ENCODE measurements at regions of chr1 and their contacts with region 1.

Region 1: GRCh38 chr1:94617134-94617805 is 75.7 kb upstream of the F3 start:
- DNase-seq: peak; percentile 59 to 95
- H3K4me3 ChIP-seq: no peak overlapping the region; the same call in 1 of the 2 replicates
- H3K27ac ChIP-seq: peak overlapping the region; percentile 76
- H3K4me1 ChIP-seq: peaks cover 71% of the 10 kb centered on the region
- H3K27me3 ChIP-seq: no peaks in the 10 kb centered on the region
- CTCF ChIP-seq: no peak

Region 2: GRCh38 chr1:94562519-94563260 is 54.6 kb before region 1 on chr1:
- CTCF ChIA-PET with region 1: no interaction called
- POLR2A ChIA-PET with region 1: interaction called, 20 read pairs
- intact Hi-C with region 1: loop called (anchors 1 kb)
- DNase-seq: peak; percentile 75 to 94
- H3K4me3 ChIP-seq: no peak overlapping the region; the same call in 1 of the 2 replicates
- H3K27ac ChIP-seq: peak overlapping the region; percentile 65
- H3K4me1 ChIP-seq: peaks cover 39% of the 10 kb centered on the region
- H3K27me3 ChIP-seq: no peaks in the 10 kb centered on the region
- CTCF ChIP-seq: no peak

Region 3: GRCh38 chr1:94579876-94580294 is 37.4 kb before region 1 on chr1:
- CTCF ChIA-PET with region 1: no interaction called
- POLR2A ChIA-PET with region 1: interaction called, 12 read pairs
- intact Hi-C with region 1: loop called (anchors 1 kb)
- DNase-seq: peak; percentile 88 to 98
- H3K4me3 ChIP-seq: no peak overlapping the region
- H3K27ac ChIP-seq: peak overlapping the region; percentile 66
- H3K4me1 ChIP-seq: peaks cover 35% of the 10 kb centered on the region
- H3K27me3 ChIP-seq: no peaks in the 10 kb centered on the region
- CTCF ChIP-seq: no peak

Region 4: GRCh38 chr1:94592571-94592920 is 24.7 kb before region 1 on chr1:
- CTCF ChIA-PET with region 1: no interaction called
- POLR2A ChIA-PET with region 1: no interaction called
- intact Hi-C with region 1: no loop called
- DNase-seq: no peak
- H3K4me3 ChIP-seq: no peak overlapping the region
- H3K27ac ChIP-seq: no peak overlapping the region
- H3K4me1 ChIP-seq: peaks cover 15% of the 10 kb centered on the region
- H3K27me3 ChIP-seq: no peaks in the 10 kb centered on the region
- CTCF ChIP-seq: no peak

Region 5: DNA sequence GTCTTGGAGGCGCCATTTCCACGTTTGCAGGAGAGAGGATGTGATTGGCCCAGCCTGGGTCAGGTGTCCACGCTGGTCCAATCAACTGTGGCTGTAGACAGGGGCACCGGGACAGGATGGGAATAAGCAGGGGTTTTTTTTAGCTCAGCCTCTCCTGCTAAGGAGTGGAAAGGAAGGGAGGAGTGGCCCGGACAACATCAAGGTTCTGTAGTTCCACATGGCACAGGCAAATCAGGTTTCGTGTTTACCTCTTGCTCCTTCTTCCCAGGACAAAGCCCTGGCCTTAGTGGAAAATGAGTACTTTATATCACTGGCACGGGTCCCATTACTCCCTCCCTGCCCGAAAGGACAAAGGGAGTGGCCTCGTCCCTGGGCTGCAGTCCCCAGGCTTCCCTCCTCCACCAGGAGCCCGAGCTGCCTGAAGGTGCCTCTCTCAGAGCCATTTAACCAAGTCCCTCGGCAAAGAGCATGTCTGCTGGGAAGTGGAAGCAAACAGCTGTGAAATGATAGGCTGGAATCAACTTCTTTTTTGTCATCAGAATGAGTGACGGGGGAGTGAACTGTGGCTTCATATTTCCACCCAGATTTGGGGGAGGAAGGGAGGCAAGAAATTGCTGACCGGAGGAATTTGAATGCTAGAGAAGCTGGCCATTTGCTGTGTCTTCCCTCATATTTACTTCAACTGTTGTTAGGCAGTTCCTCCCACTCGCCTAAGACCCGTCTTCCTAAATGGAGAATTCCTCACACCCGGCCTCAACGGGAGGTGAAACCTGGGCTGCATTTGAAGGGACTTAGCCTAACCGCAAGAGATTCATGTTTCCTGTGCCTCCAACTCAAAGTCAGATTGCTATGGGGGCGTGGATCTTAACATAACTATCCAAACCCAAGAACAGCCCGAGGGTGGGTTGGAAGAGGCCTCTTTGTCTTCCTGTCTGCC is 118.0 kb after region 1 on chr1:
- CTCF ChIA-PET with region 1: interaction called, 16 read pairs
- POLR2A ChIA-PET with region 1: no interaction called
- intact Hi-C with region 1: no loop called
- DNase-seq: no peak
- H3K4me3 ChIP-seq: no peak overlapping the region
- H3K27ac ChIP-seq: no peak overlapping the region
- H3K4me1 ChIP-seq: peaks cover 23% of the 10 kb centered on the region
- H3K27me3 ChIP-seq: no peaks in the 10 kb centered on the region
- CTCF ChIP-seq: no peak